Activated T-helper 2 cell treated with anti-CD3 and anti-CD28 coated beads, Interferon-gamma antibody, Interleukin-2, Interleukin-4, amounts not matched to agents 10 μg/mL and 5 μg/mL and 100 μg/mL, durations not matched to agents 14 hours and 24 hours and 36 hours (primary cell): ENCODE measurements at regions of chr16 and their contacts with region 1.

Region 1: GRCh38 chr16:11379420-11379819 is 34.2 kb downstream of the RMI2 start:
- DNase-seq: no peak
- H3K4me3 Mint-ChIP-seq: no peak overlapping the region
- H3K27ac Mint-ChIP-seq: peak overlapping the region; percentile 74
- H3K4me1 Mint-ChIP-seq: peaks cover 26% of the 10 kb centered on the region
- H3K27me3 Mint-ChIP-seq: no peaks in the 10 kb centered on the region

Region 2: DNA sequence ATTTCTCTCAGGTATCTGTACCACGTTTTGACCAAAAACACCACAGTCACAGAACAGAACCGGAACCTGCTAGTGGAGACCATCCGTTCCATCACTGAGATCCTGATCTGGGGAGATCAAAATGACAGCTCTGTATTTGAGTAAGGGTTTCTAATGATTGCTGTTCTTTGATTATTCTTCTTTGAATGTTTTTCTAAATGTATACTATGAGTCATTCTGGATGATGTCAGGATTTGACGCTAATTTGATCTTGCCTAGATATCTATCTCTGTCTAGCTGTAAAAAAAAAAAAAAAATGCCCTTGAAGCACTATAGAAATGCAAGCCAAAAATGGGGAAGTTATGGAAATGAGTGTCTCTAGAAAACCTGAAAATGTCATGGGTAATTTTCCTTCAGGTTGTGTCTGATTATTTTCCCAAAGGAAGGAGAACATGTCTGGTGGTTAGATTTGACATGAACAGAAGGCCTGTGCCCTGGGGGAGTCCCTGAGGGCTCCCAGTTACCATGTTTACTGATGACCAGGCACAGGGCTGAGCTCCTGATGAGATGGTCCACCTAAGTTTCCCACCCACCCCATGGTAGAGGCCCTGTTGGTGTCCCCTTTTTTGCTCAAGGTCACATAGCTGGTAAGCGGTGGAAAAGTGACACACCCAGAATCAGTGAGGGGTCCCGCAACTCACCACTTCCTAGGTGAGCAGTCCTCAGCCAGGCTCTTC is 421.5 kb before region 1 on chr16:
- intact Hi-C with region 1: loop called (anchors 2 kb)
- DNase-seq: no peak
- H3K4me3 Mint-ChIP-seq: peak overlapping the region; percentile 32
- H3K27ac Mint-ChIP-seq: peak overlapping the region; percentile 87
- H3K4me1 Mint-ChIP-seq: peaks cover 74% of the 10 kb centered on the region
- H3K27me3 Mint-ChIP-seq: no peaks in the 10 kb centered on the region

Region 3: GRCh38 chr16:11356573-11357331 is 22.7 kb before region 1 on chr16:
- intact Hi-C with region 1: loop called (anchors 2 kb)
- DNase-seq: peak; percentile 33
- H3K4me3 Mint-ChIP-seq: no peak overlapping the region
- H3K27ac Mint-ChIP-seq: no peak overlapping the region
- H3K4me1 Mint-ChIP-seq: peaks cover 68% of the 10 kb centered on the region
- H3K27me3 Mint-ChIP-seq: no peaks in the 10 kb centered on the region